HEK293 (cell line): ENCODE measurements at regions of chr2 and their contacts with region 1.

Region 1: GRCh38 chr2:166361351-166362153 is 14.2 kb downstream of the SCN9A start:
- H3K4me3 ChIP-seq: no peak overlapping the region
- H3K27ac ChIP-seq: no peak overlapping the region
- H3K4me1 ChIP-seq: peaks cover 8% of the 10 kb centered on the region
- CTCF ChIP-seq: peak; percentile 24; the same call in 1 of the 2 replicates

Region 2: GRCh38 chr2:166269322-166269721 is 92.2 kb before region 1 on chr2:
- CTCF ChIA-PET with region 1: no interaction called
- POLR2A ChIA-PET with region 1: no interaction called
- H3K4me3 ChIP-seq: no peak overlapping the region
- H3K27ac ChIP-seq: no peak overlapping the region
- H3K4me1 ChIP-seq: no peaks in the 10 kb centered on the region
- CTCF ChIP-seq: no peak

Region 3: GRCh38 chr2:166344286-166345113 is 17.1 kb before region 1 on chr2:
- CTCF ChIA-PET with region 1: interaction called, 17 read pairs
- POLR2A ChIA-PET with region 1: no interaction called
- H3K4me3 ChIP-seq: no peak overlapping the region
- H3K27ac ChIP-seq: no peak overlapping the region
- H3K4me1 ChIP-seq: peaks cover 2% of the 10 kb centered on the region; the same call in 1 of the 2 replicates
- CTCF ChIP-seq: no peak

Region 4: DNA sequence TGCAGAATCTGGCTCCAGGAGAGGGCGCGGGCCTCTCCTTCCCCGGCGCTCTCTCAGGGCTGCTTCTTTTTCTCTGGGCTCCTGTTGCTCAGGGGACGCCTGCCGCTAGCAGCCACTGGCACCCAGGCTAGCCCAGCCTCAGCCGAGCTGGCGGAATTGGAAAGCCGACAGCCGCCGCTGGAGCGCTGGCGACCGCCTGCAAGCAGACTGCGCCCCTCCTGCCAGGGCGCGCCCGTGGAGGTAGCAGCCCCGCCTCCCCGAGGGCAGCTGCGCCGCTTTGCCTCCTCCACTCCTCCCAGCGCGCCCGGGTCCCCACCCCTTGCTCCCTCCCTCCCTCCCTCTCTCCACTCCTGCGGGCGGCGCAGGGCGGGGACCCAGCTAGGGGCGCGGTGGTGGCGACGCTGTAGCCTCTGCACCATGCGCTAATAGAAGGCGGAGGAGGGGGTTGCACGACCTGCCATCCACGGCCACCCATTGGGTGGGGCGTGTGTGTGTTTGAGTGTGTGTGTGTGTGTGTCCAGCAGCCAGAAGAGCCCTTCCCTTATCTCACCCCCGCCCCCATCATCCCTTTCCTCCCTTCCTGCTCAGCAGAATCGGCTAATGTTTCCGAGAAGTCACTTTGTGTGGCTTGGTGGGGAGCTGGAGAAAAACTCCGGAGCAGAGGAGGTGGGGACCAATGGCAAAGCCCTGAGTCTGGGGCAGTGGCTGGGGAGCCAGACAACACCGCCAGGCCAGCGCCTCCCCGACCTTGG is 14.4 kb after region 1 on chr2 and contains the start of gene SCN9A:
- CTCF ChIA-PET with region 1: interaction called, 25 read pairs
- POLR2A ChIA-PET with region 1: no interaction called
- H3K4me3 ChIP-seq: peak within 1 kb of the TSS; percentile 72
- H3K27ac ChIP-seq: peak within 1 kb of the TSS; percentile 74
- H3K4me1 ChIP-seq: peaks cover 20% of the 10 kb centered on the region
- CTCF ChIP-seq: peak; percentile 85

Region 5: DNA sequence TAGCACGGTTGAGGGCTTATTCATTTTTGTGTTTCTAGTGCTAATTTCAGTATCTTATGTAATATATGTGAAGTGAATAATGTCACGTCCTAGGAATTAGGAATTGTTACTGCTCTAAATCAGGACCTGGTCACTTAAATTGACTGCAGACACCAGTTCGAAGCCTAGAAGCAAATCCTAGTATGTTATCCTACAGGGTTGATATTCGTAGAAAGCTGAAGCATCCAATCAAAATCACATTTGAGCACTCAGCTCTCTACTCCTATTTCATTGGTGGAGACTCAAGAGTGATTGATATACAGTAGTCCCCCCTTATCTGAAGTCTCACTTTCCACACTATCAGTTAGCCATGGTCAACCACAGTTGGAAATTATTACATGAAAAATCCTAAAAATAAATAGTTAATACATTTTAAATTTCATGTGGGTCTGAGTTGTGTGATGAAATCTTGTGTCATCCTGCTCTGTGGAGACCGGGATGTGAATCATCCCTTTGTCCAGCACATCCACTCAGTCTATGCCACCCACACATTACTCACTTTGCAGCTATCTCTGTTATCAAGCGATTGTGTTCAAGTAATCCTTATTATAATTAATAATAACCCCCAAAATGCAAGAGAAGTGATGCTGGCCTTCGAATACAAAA is 49.4 kb after region 1 on chr2:
- CTCF ChIA-PET with region 1: interaction called, 17 read pairs
- POLR2A ChIA-PET with region 1: no interaction called
- H3K4me3 ChIP-seq: no peak overlapping the region
- H3K27ac ChIP-seq: no peak overlapping the region
- H3K4me1 ChIP-seq: no peaks in the 10 kb centered on the region
- CTCF ChIP-seq: no peak

Region 6: DNA sequence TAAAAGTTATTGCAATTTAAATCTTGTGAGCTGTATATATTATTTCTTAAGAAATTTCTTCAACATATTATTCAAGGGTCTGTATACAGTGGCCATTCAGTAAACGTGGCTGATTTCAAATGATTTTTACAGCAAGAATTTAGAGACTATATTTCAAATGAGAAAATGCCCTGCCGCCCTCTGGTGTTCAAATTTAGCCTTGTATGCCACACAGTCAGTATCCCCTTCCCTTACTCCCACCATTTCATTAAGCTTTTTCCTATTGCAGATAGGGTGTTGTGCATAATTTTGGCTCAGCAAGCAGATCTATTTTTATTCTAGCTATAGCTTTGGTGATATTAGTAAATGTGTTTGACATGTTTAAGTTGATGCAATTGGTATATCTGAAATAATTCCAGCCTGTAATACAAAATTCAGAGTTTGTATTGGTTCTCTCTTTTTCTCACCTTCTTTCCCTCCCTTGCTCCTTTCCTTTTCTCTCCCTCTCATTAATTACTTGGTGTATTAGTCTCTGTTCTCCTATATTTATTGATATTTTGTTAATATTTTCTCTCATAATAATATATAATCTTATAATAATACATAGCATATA is 155.3 kb after region 1 on chr2:
- CTCF ChIA-PET with region 1: interaction called, 16 read pairs
- POLR2A ChIA-PET with region 1: no interaction called
- H3K4me3 ChIP-seq: no peak overlapping the region
- H3K27ac ChIP-seq: no peak overlapping the region
- H3K4me1 ChIP-seq: no peaks in the 10 kb centered on the region
- CTCF ChIP-seq: peak; percentile 42; the same call in 1 of the 2 replicates